ENCODE measurements at regions of chr1 and their contacts with region 1.

Region 1: GRCh38 chr1:32394141-32394889 is at the start of gene BSDC1:
- DNase-seq: peak; percentile 98
- H3K4me3 Mint-ChIP-seq: peak within 1 kb of the TSS; percentile 97
- H3K27ac Mint-ChIP-seq: peak within 1 kb of the TSS; percentile 99
- H3K4me1 Mint-ChIP-seq: peaks cover 16% of the 10 kb centered on the region
- H3K27me3 Mint-ChIP-seq: peaks cover 7% of the 10 kb centered on the region
- total RNA-seq, gene BSDC1: 48.8 and 50.3 TPM in 2 replicates

Region 2: GRCh38 chr1:31644560-31645273 is 749.6 kb before region 1 on chr1 and contains the start of gene PEF1:
- intact Hi-C with region 1: loop called (anchors 2 kb)
- DNase-seq: peak; percentile 98
- H3K4me3 Mint-ChIP-seq: peak within 1 kb of the TSS; percentile 96
- H3K27ac Mint-ChIP-seq: peak within 1 kb of the TSS; percentile 100
- H3K4me1 Mint-ChIP-seq: peaks cover 21% of the 10 kb centered on the region
- H3K27me3 Mint-ChIP-seq: peaks cover 2% of the 10 kb centered on the region
- total RNA-seq, gene PEF1: 57.6 and 66.1 TPM in 2 replicates

Region 3: GRCh38 chr1:31910933-31911332 is 483.4 kb before region 1 on chr1:
- intact Hi-C with region 1: no loop called
- DNase-seq: no peak
- H3K4me3 Mint-ChIP-seq: peak overlapping the region; percentile 1
- H3K27ac Mint-ChIP-seq: peak overlapping the region; percentile 33
- H3K4me1 Mint-ChIP-seq: peaks cover 51% of the 10 kb centered on the region
- H3K27me3 Mint-ChIP-seq: no peaks in the 10 kb centered on the region

Region 4: DNA sequence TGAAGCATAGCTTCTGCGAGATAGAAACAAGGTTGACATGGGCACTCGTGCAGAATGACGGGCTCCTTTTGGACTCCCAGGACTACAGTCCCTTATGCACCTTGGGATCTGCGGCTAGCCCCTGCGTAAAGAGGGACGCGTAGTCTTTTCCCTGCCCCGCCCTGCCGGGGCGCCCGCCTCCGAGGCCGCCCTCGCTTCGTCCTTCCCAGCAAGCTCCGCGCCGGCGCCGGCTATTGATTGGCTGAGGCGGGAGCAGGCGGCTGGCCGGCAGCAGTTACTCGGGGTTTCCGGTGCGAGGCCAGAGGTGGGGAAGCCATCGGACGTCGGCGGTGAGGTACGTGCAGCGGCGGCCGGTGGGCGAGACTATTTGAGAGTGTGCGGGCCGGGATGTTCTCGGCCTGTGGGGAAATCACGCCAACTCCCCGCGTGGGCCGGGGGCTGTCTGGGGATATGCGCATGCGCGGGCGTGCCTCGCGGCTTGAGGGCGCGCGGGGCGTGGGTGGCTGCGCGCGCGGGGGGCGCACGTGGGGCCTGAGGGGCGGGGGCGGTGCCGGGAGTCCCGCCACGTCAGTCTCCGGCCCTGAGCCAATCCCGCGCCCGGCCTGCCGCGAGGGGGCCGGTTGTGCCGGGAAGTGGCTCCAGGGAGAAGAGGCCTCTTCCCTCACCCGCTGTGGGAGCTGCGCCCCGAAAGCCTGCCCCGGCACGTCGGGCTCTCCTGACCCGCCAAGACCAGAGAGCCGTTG is 214.7 kb before region 1 on chr1 and contains the start of gene TXLNA:
- intact Hi-C with region 1: loop called (anchors 1 kb)
- DNase-seq: peak; percentile 89
- H3K4me3 Mint-ChIP-seq: peak within 1 kb of the TSS; percentile 96
- H3K27ac Mint-ChIP-seq: peak within 1 kb of the TSS; percentile 93
- H3K4me1 Mint-ChIP-seq: peaks cover 47% of the 10 kb centered on the region
- H3K27me3 Mint-ChIP-seq: no peaks in the 10 kb centered on the region
- total RNA-seq, gene TXLNA: 109 and 110 TPM in 2 replicates

Region 5: DNA sequence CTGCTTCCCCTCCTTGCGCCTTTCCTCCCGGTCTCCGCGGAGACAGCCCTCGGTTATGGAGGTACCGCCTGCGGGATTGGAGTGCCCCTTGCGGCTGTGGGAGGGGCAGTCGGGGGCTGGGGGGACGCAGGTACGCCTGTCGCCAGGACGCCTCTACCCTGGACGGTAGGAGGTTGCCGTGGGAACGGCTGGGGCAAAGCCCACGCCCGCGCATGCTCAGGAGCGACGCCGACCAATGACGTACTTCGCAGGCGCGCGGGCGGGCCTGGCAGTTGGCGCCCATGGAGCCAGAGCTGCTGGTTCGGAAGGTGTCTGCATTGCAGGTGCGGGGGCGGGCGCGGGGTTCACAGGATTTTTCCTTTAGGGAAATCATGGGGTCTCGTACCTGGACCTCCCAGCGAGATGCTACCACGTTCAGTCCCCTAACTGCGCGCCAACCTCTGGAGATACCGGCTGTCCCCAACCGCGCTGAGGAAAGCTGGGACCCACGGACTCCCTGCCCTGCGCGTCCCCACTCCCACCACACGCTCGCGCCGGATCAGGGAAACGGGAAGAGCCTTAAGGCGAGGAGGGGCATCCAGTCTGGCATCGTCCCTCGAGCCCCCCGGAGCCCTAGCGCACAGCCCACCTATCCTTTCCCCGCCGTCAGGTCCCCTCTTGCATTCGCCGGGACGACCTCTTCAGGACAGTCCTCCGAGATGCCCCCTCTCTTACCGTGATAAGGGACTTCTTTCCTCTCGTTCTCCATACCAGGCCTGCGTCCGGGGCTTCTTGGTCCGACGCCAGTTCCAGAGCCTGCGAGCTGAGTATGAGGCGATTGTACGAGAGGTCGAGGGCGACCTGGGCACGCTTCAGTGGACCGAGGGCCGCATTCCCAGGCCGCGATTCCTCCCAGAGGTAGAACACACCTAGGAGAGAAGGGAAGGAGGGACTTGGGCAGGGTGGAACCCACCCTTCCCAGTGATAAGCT is 188.6 kb before region 1 on chr1 and contains the start of gene IQCC:
- intact Hi-C with region 1: loop called (anchors 1 kb)
- DNase-seq: peak; percentile 83
- H3K4me3 Mint-ChIP-seq: peak within 1 kb of the TSS; percentile 90
- H3K27ac Mint-ChIP-seq: peak within 1 kb of the TSS; percentile 80
- H3K4me1 Mint-ChIP-seq: peaks cover 38% of the 10 kb centered on the region
- H3K27me3 Mint-ChIP-seq: no peaks in the 10 kb centered on the region
- total RNA-seq, gene IQCC: 5.7 and 6.0 TPM in 2 replicates

Region 6: DNA sequence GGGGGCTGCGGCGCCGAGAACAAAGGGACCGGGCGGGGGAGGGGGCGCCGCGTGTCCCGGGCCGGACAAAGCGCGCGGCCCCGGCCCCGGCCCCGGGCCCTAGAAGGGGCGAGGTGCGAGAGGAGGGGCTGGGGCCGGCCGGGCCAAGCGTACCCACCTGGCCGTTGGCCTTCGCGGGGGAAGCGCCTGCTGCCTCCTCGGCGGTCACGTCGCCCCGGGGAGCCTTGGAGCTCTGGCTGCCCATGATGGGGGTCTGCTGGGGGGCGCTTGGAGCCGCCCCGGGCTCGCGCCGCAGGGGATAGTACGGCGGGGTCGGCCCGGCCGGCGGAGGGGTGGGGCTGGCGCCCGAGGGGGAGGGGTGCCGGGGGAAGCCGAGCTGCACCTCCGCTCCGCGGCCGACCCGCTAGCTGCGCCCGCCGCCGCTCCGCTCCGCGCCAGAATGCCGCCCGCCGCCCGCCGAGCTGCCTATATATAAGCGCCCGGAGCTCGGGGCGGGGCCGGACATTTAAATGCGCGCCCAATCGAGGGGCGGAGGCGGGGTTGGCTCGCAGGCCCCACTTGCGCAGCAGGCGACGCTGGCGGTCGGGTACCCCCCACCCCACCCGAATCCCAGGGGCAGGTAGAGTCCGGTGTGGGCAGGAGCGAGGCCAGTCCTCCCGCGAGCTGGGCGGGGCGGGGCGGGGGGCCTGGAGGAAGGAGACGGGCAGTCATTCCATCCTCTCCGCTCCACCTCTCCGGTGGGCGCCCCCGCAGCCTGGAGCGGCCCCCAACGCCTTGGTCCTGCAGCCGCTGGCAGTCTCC is 58.3 kb before region 1 on chr1 and contains the start of gene MARCKSL1:
- intact Hi-C with region 1: loop called (anchors 1 kb)
- DNase-seq: peak; percentile 80
- H3K4me3 Mint-ChIP-seq: peak within 1 kb of the TSS; percentile 88
- H3K27ac Mint-ChIP-seq: peak within 1 kb of the TSS; percentile 67
- H3K4me1 Mint-ChIP-seq: peaks cover 52% of the 10 kb centered on the region
- H3K27me3 Mint-ChIP-seq: no peaks in the 10 kb centered on the region
- total RNA-seq, gene MARCKSL1: 31.6 and 31.8 TPM in 2 replicates

Measured in activated T-helper 1 cell treated with anti-CD3 and anti-CD28 coated beads, Interleukin-12 subunit alpha, Interleukin-12 subunit beta, Interleukin-2, Interleukin-4 antibody, amounts not matched to agents 30 ng/mL and 10 ng/mL and 1 ng/mL, durations not matched to agents 14 hours and 24 hours and 36 hours (primary cell).